ENCODE measurements at regions of chr11 and their contacts with region 1.

Region 1: GRCh38 chr11:118051611-118052461 is 25.0 kb upstream of the TMPRSS4 start:
- DNase-seq: peak; percentile 23
- ATAC-seq: peak; percentile 81
- H3K4me3 ChIP-seq: no peak overlapping the region
- H3K27ac ChIP-seq: no peak overlapping the region
- H3K4me1 ChIP-seq: peaks cover 18% of the 10 kb centered on the region
- H3K27me3 ChIP-seq: no peaks in the 10 kb centered on the region
- CTCF ChIP-seq: no peak
- EP300 ChIP-seq: peak; percentile 14 to 42; a peak in 2 of 4 replicates
- POLR2A ChIP-seq: no peak
- RAD21 ChIP-seq: no peak

Region 2: DNA sequence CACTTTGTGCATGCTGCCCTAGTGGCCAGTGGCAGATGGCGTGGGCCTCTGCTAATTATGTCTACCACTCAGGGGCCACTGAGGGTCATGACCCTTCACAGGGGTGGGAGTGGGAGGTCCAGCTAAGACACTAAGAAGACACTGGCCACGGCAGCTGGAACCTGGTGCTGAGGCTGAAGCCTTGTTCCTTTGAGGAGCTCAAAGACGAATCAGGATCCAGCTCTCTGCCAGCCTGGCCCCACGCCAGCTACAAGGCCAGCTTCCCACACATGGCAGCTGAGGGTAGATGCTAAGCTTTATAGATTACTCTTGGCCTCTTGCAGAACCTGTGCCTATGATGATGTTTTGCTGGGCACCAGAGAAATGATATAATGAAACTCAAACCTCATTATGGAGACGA is 481.1 kb before region 1 on chr11:
- CTCF ChIA-PET with region 1: no interaction called
- POLR2A ChIA-PET with region 1: no interaction called
- RAD21 ChIA-PET with region 1: no interaction called
- SMC1A ChIA-PET with region 1: no interaction called
- in situ Hi-C with region 1: no loop called
- intact Hi-C with region 1: no loop called
- DNase-seq: no peak
- ATAC-seq: no peak
- H3K4me3 ChIP-seq: no peak overlapping the region
- H3K27ac ChIP-seq: no peak overlapping the region
- H3K4me1 ChIP-seq: no peaks in the 10 kb centered on the region
- H3K27me3 ChIP-seq: peaks cover 0 to 4% of the 10 kb centered on the region in 2 experiments; a peak in 2 of 4 replicates
- CTCF ChIP-seq: no peak
- EP300 ChIP-seq: no peak
- POLR2A ChIP-seq: no peak
- RAD21 ChIP-seq: no peak

Region 3: GRCh38 chr11:117807482-117808327 is 244.1 kb before region 1 on chr11:
- CTCF ChIA-PET with region 1: interaction called, 146 read pairs
- POLR2A ChIA-PET with region 1: interaction called, 3 read pairs
- RAD21 ChIA-PET with region 1: interaction called, 52 read pairs
- SMC1A ChIA-PET with region 1: interaction called, 65 read pairs
- in situ Hi-C with region 1: no loop called
- intact Hi-C with region 1: loop called (anchors 1 kb)
- DNase-seq: no peak
- ATAC-seq: peak; percentile 85
- H3K4me3 ChIP-seq: no peak overlapping the region
- H3K27ac ChIP-seq: no peak overlapping the region
- H3K4me1 ChIP-seq: peaks cover 17% of the 10 kb centered on the region
- H3K27me3 ChIP-seq: no peaks in the 10 kb centered on the region
- CTCF ChIP-seq: peak; percentile 86 to 91 (median 89)
- EP300 ChIP-seq: no peak
- POLR2A ChIP-seq: no peak
- RAD21 ChIP-seq: peak; percentile 95

Region 4: GRCh38 chr11:117843666-117844484 is 208.0 kb before region 1 on chr11:
- CTCF ChIA-PET with region 1: interaction called, 127 read pairs
- POLR2A ChIA-PET with region 1: interaction called, 3 read pairs
- RAD21 ChIA-PET with region 1: interaction called, 93 read pairs
- SMC1A ChIA-PET with region 1: interaction called, 95 read pairs
- in situ Hi-C with region 1: loop called (anchors 5 kb)
- intact Hi-C with region 1: loop called (anchors 1 kb)
- DNase-seq: no peak
- ATAC-seq: peak; percentile 89
- H3K4me3 ChIP-seq: no peak overlapping the region
- H3K27ac ChIP-seq: no peak overlapping the region
- H3K4me1 ChIP-seq: no peaks in the 10 kb centered on the region; the same call in 1 of the 2 replicates
- H3K27me3 ChIP-seq: no peaks in the 10 kb centered on the region
- CTCF ChIP-seq: peak; percentile 94 to 98 (median 97)
- EP300 ChIP-seq: no peak
- POLR2A ChIP-seq: no peak
- RAD21 ChIP-seq: peak; percentile 87

Region 5: GRCh38 chr11:117907251-117907981 is 144.4 kb before region 1 on chr11:
- CTCF ChIA-PET with region 1: interaction called, 11 read pairs
- POLR2A ChIA-PET with region 1: no interaction called
- RAD21 ChIA-PET with region 1: interaction called, 12 read pairs
- SMC1A ChIA-PET with region 1: interaction called, 15 read pairs
- in situ Hi-C with region 1: no loop called
- intact Hi-C with region 1: no loop called
- DNase-seq: peak; percentile 54
- ATAC-seq: peak; percentile 93
- H3K4me3 ChIP-seq: no peak overlapping the region
- H3K27ac ChIP-seq: no peak overlapping the region
- H3K4me1 ChIP-seq: peaks cover 5% of the 10 kb centered on the region; the same call in 1 of the 2 replicates
- H3K27me3 ChIP-seq: no peaks in the 10 kb centered on the region; a peak in 1 of 4 replicates
- CTCF ChIP-seq: no peak
- EP300 ChIP-seq: no peak
- POLR2A ChIP-seq: no peak
- RAD21 ChIP-seq: no peak

Region 6: GRCh38 chr11:117985953-117986887 is 65.6 kb before region 1 on chr11 and contains the start of gene IL10RA:
- CTCF ChIA-PET with region 1: interaction called, 45 read pairs
- POLR2A ChIA-PET with region 1: interaction called, 9 read pairs
- RAD21 ChIA-PET with region 1: interaction called, 60 read pairs
- SMC1A ChIA-PET with region 1: interaction called, 67 read pairs
- in situ Hi-C with region 1: no loop called
- intact Hi-C with region 1: loop called (anchors 2 kb)
- DNase-seq: no peak
- ATAC-seq: peak; percentile 87
- H3K4me3 ChIP-seq: peak within 1 kb of the TSS; percentile 79
- H3K27ac ChIP-seq: peak within 1 kb of the TSS; percentile 84
- H3K4me1 ChIP-seq: peaks cover 18% of the 10 kb centered on the region
- H3K27me3 ChIP-seq: no peaks in the 10 kb centered on the region
- CTCF ChIP-seq: peak in 2 of 3 experiments; percentile 10 to 15; a peak in 1 of 6 replicates
- EP300 ChIP-seq: 0 out of 4 replicates have a peak, but pooled peaks of 1 of the 2 experiments have one; percentile 26
- POLR2A ChIP-seq: peak; percentile 99
- RAD21 ChIP-seq: no peak
- polyA plus RNA-seq, gene IL10RA: 0.77 to 1.4 TPM

Region 7: GRCh38 chr11:118010738-118011461 is 40.9 kb before region 1 on chr11:
- CTCF ChIA-PET with region 1: interaction called, 17 read pairs
- POLR2A ChIA-PET with region 1: interaction called, 6 read pairs
- RAD21 ChIA-PET with region 1: interaction called, 12 read pairs
- SMC1A ChIA-PET with region 1: interaction called, 20 read pairs
- in situ Hi-C with region 1: no loop called
- intact Hi-C with region 1: loop called (anchors 5 kb)
- DNase-seq: peak; percentile 86
- ATAC-seq: peak; percentile 85
- H3K4me3 ChIP-seq: no peak overlapping the region
- H3K27ac ChIP-seq: peak overlapping the region; percentile 97
- H3K4me1 ChIP-seq: peaks cover 80% of the 10 kb centered on the region
- H3K27me3 ChIP-seq: no peaks in the 10 kb centered on the region
- CTCF ChIP-seq: no peak
- EP300 ChIP-seq: peak; percentile 100
- POLR2A ChIP-seq: no peak
- RAD21 ChIP-seq: 0 out of 2 replicates have a peak, but pooled peaks have one; percentile 15

Region 8: DNA sequence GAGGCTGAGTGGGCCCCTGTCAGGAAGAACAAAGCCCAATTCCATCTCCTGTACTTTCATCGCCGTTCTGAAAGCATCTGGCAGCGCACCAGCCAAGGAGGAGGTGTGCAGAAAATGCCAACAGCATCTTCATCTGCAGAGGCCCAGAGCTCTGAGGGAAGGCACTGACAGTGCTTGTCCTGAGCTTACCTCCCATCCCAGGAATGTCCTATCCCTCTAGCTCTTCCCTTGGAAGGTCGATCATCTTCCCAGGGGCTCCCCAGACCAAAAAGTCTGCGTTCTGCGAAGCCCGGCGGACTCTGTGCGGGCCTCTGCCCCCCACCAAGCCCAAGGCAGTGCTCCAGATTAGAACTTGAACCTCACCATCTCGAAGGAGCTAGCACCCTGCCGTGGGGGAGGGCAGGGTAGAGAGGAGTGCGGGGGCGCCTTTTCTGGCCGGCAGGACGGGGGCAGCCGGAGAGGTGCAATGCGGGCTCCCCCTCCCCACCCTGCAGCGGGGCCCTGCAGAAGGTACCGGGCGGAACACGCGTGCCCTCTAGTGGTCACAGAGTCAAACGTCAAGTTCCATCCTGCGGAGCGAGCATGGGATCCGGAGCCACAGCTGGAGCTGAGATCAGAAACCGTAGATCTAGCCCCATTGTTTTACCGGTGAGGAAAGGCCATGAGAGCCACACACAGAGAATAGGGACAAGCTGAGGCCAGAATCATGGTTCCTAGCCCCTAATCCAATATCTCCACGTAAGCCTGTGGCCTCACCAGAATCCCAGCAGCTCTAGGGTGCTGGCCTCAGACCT is 119.6 kb after region 1 on chr11:
- CTCF ChIA-PET with region 1: interaction called, 20 read pairs
- POLR2A ChIA-PET with region 1: no interaction called
- RAD21 ChIA-PET with region 1: interaction called, 4 read pairs
- SMC1A ChIA-PET with region 1: interaction called, 3 read pairs
- in situ Hi-C with region 1: no loop called
- intact Hi-C with region 1: no loop called
- DNase-seq: no peak
- ATAC-seq: peak; percentile 91
- H3K4me3 ChIP-seq: no peak overlapping the region
- H3K27ac ChIP-seq: no peak overlapping the region
- H3K4me1 ChIP-seq: no peaks in the 10 kb centered on the region
- H3K27me3 ChIP-seq: peaks cover 0 to 3% of the 10 kb centered on the region in 2 experiments; a peak in 2 of 4 replicates
- CTCF ChIP-seq: peak; percentile 86 to 93 (median 88)
- EP300 ChIP-seq: no peak
- POLR2A ChIP-seq: no peak
- RAD21 ChIP-seq: peak; percentile 66